ENCODE measurements at regions of chr11 and their contacts with region 1.

Region 1: GRCh38 chr11:35246745-35247144 is 107.8 kb downstream of the CD44 start:
- DNase-seq: no peak
- ATAC-seq: no peak
- H3K4me3 ChIP-seq: no peak overlapping the region
- H3K4me3 Mint-ChIP-seq: no peak overlapping the region
- H3K27ac ChIP-seq: peak overlapping the region; percentile 79 to 84
- H3K27ac Mint-ChIP-seq: peak overlapping the region; percentile 98
- H3K4me1 ChIP-seq: peaks cover 63% of the 10 kb centered on the region
- H3K4me1 Mint-ChIP-seq: peaks cover 80% of the 10 kb centered on the region
- H3K27me3 ChIP-seq: no peaks in the 10 kb centered on the region
- H3K27me3 Mint-ChIP-seq: no peaks in the 10 kb centered on the region
- CTCF ChIP-seq: no peak

Region 2: DNA sequence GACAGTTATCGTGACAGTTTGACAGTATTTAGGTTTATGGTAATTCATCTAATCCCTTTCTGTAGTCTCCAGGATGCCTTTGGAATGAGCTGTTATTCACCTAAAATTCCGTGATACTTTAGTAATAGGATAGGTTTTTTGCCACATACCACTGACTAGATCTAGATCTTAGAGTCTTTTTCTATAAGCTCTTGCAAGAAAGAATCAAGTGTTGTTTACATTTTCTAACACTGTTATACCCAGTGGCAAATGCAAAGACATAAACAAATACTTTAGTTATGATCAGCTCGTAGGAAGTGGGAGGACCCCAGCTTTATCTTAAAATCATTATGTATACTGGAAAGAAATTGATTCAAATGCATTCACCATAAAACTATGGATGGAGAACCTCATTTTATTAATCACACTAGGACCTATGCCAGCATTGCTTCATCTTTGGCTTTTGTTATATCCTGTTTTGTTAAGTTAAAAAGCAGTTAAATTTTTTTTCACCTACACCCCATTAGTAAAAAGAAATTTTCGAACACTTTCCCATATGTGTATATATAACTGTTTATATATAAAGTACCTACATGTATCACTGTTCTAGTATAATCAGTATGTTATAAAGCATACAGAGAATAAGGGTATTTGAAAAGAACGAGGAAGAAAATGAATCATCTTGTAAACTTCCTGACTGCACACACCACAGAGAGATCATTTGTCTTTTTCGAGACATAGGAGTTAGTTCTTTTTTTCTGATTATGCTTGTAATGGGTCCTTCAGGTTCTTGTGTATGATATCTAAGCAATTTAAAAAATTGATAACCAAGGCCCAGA is 269.4 kb before region 1 on chr11:
- CTCF ChIA-PET with region 1: no interaction called
- POLR2A ChIA-PET with region 1: no interaction called
- intact Hi-C with region 1: no loop called
- DNase-seq: no peak
- ATAC-seq: no peak
- H3K4me3 ChIP-seq: no peak overlapping the region
- H3K4me3 Mint-ChIP-seq: no peak overlapping the region
- H3K27ac ChIP-seq: no peak overlapping the region
- H3K27ac Mint-ChIP-seq: no peak overlapping the region
- H3K4me1 ChIP-seq: no peaks in the 10 kb centered on the region
- H3K4me1 Mint-ChIP-seq: peaks cover 16% of the 10 kb centered on the region
- H3K27me3 ChIP-seq: no peaks in the 10 kb centered on the region
- H3K27me3 Mint-ChIP-seq: no peaks in the 10 kb centered on the region
- CTCF ChIP-seq: no peak

Region 3: DNA sequence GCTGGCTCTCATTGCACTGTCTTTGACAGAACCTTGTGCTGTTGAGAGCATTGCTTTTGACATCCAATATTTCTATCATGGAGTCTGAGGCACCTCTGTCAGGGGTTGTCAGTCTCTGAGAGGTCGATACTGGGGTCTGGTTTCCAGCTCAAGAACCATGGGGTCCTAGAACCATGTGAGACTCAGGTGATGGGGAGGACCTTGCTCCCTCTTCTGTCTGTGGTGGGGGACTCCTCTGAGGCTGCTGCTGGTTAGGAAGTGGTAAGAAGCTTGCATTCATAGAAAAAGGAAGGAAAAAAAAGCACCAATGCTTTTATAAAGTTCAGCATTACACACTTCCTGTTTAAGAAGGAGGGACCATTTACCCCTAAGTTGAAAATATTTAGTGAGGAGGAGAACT is 199.6 kb before region 1 on chr11:
- CTCF ChIA-PET with region 1: no interaction called
- POLR2A ChIA-PET with region 1: no interaction called
- intact Hi-C with region 1: loop called in 1 of 2 experiments (anchors 1 kb)
- DNase-seq: peak in 8 of 9 experiments; percentile 26 to 92 (median 68)
- ATAC-seq: peak; percentile 62
- H3K4me3 ChIP-seq: no peak overlapping the region
- H3K4me3 Mint-ChIP-seq: peak overlapping the region; percentile 36
- H3K27ac ChIP-seq: peak overlapping the region; percentile 53 to 96
- H3K27ac Mint-ChIP-seq: peak overlapping the region; percentile 100
- H3K4me1 ChIP-seq: peaks cover 69% of the 10 kb centered on the region
- H3K4me1 Mint-ChIP-seq: peaks cover 80% of the 10 kb centered on the region
- H3K27me3 ChIP-seq: no peaks in the 10 kb centered on the region
- H3K27me3 Mint-ChIP-seq: no peaks in the 10 kb centered on the region
- CTCF ChIP-seq: no peak

Region 4: GRCh38 chr11:35144136-35144741 is 102.5 kb before region 1 on chr11:
- CTCF ChIA-PET with region 1: no interaction called
- POLR2A ChIA-PET with region 1: interaction called, 11 read pairs
- intact Hi-C with region 1: loop called in 1 of 2 experiments (anchors 2 kb)
- DNase-seq: peak in 8 of 9 experiments; percentile 35 to 89 (median 70)
- ATAC-seq: peak; percentile 51
- H3K4me3 ChIP-seq: peak overlapping the region; percentile 37 to 46
- H3K4me3 Mint-ChIP-seq: peak overlapping the region; percentile 79
- H3K27ac ChIP-seq: peak overlapping the region; percentile 54 to 77
- H3K27ac Mint-ChIP-seq: peak overlapping the region; percentile 98
- H3K4me1 ChIP-seq: peaks cover 70% of the 10 kb centered on the region
- H3K4me1 Mint-ChIP-seq: peaks cover 80% of the 10 kb centered on the region
- H3K27me3 ChIP-seq: no peaks in the 10 kb centered on the region
- H3K27me3 Mint-ChIP-seq: no peaks in the 10 kb centered on the region
- CTCF ChIP-seq: no peak

Region 5: DNA sequence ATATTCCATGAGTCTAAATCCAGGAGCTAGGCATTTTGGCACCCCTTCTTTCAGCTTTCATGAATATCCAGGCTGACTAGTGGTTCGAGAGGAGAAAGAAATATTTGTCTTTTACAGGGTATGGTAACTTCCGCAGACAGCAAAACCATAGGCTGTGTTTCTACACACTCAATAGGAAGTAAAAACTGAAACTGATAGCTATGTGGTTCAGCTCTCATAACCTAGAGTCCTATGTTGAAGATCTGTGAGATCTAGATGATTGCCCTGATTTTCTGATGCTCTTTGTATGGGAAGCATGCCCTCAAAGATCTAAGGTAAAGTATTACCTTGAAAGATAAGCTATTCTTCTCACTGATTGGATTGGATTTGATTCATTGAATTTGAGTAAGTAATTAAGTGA is 10.5 kb after region 1 on chr11:
- CTCF ChIA-PET with region 1: interaction called, 5 read pairs
- POLR2A ChIA-PET with region 1: interaction called, 26 read pairs
- intact Hi-C with region 1: no loop called
- DNase-seq: peak in 2 of 9 experiments; percentile 52 to 72
- ATAC-seq: peak; percentile 98
- H3K4me3 ChIP-seq: no peak overlapping the region
- H3K4me3 Mint-ChIP-seq: peak overlapping the region; percentile 56
- H3K27ac ChIP-seq: peak overlapping the region in 1 of 2 experiments; percentile 72
- H3K27ac Mint-ChIP-seq: peak overlapping the region; percentile 96
- H3K4me1 ChIP-seq: peaks cover 26% of the 10 kb centered on the region
- H3K4me1 Mint-ChIP-seq: peaks cover 40% of the 10 kb centered on the region
- H3K27me3 ChIP-seq: no peaks in the 10 kb centered on the region
- H3K27me3 Mint-ChIP-seq: no peaks in the 10 kb centered on the region
- CTCF ChIP-seq: no peak

Region 6: DNA sequence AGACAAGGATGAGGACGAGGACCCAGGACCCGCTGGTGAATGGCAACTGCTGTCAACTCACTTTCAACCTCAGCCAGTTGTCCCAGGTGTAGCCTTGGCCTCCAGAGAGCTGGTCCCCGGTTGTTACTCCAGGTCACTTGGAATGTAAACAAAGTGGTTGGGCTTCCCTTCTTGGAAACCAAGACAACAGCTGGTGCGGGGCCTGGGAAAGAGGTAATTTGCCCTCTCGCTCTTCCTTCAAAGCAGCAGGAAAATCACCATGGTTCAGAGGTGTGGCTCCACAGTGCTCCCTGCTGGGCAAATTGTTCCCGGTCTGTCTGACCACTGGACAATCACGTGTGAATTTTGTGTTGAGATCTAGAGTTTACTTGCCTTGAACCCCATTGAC is 157.6 kb after region 1 on chr11:
- CTCF ChIA-PET with region 1: no interaction called
- POLR2A ChIA-PET with region 1: no interaction called
- intact Hi-C with region 1: no loop called
- DNase-seq: peak in 2 of 9 experiments; percentile 12 to 19
- ATAC-seq: no peak
- H3K4me3 ChIP-seq: no peak overlapping the region
- H3K4me3 Mint-ChIP-seq: no peak overlapping the region
- H3K27ac ChIP-seq: no peak overlapping the region
- H3K27ac Mint-ChIP-seq: no peak overlapping the region
- H3K4me1 ChIP-seq: no peaks in the 10 kb centered on the region
- H3K4me1 Mint-ChIP-seq: no peaks in the 10 kb centered on the region
- H3K27me3 ChIP-seq: no peaks in the 10 kb centered on the region
- H3K27me3 Mint-ChIP-seq: peaks cover 8% of the 10 kb centered on the region
- CTCF ChIP-seq: no peak

Measured in CD8-positive, alpha-beta T cell (primary cell).